PC-9 (cell line): ENCODE measurements at regions of chr19 and their contacts with region 1.

Region 1: GRCh38 chr19:45092747-45093678 is at the start of gene PPP1R37:
- DNase-seq: peak; percentile 90 to 94
- H3K4me3 ChIP-seq: peak within 1 kb of the TSS; percentile 80
- H3K27ac ChIP-seq: peak within 1 kb of the TSS; percentile 50
- H3K4me1 ChIP-seq: peaks cover 18% of the 10 kb centered on the region
- H3K27me3 ChIP-seq: no peaks in the 10 kb centered on the region
- CTCF ChIP-seq: peak; percentile 44; the same call in 1 of the 2 replicates
- total RNA-seq, gene PPP1R37: 41.1 and 49.5 TPM in 2 replicates

Region 2: DNA sequence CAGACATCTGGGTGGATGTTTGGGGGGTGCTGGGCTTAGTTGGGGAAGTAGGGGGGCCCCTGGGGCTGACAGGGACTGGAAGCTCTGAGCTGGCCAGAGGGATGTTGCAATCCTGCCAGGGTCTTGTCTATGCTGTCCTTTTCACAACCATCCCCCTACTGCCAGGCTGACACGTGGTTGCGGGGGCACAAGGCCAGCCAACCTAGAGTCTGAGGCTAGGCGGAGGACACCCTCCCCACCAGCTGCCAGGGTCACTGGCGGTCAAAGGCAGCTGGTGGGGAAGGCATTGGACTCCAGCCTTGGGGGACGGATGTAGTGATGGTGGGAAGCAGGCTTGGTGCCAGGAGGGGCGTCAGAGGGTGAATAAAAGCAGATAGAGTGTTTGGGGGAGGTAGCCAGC is 180.2 kb before region 1 on chr19:
- CTCF ChIA-PET with region 1: no interaction called
- POLR2A ChIA-PET with region 1: interaction called, 30 read pairs
- intact Hi-C with region 1: no loop called
- DNase-seq: peak in 1 of 2 experiments; percentile 13
- H3K4me3 ChIP-seq: no peak overlapping the region
- H3K27ac ChIP-seq: no peak overlapping the region
- H3K4me1 ChIP-seq: peaks cover 19% of the 10 kb centered on the region
- H3K27me3 ChIP-seq: no peaks in the 10 kb centered on the region
- CTCF ChIP-seq: no peak

Region 3: DNA sequence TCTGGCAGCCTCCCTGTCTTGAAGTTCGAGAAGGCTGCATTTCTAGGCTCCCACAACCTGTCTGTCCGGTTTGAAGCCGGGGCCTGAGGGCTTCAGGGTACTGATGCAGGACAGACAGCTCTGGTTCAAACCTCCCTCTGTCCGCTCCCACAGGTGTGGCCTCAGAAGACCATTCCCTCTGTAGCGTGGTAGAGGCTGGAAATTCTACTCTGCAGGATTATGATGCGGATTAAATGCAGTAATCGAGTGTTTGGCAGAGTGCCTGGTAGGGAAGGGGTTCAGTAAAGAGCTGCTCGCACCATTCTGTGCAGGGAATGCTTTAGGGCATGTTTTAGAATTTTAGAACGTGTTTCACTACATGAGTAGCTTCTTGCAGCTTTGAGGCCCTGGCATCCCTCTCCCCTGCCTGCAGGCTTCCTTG is 30.4 kb after region 1 on chr19:
- CTCF ChIA-PET with region 1: interaction called, 3 read pairs
- POLR2A ChIA-PET with region 1: no interaction called
- intact Hi-C with region 1: loop called (anchors 1 kb)
- DNase-seq: peak; percentile 84 to 96
- H3K4me3 ChIP-seq: no peak overlapping the region
- H3K27ac ChIP-seq: peak overlapping the region; percentile 52
- H3K4me1 ChIP-seq: peaks cover 42% of the 10 kb centered on the region
- H3K27me3 ChIP-seq: no peaks in the 10 kb centered on the region
- CTCF ChIP-seq: no peak

Region 4: GRCh38 chr19:45164577-45165335 is 71.7 kb after region 1 on chr19:
- CTCF ChIA-PET with region 1: no interaction called
- POLR2A ChIA-PET with region 1: interaction called, 13 read pairs
- intact Hi-C with region 1: no loop called
- DNase-seq: peak; percentile 82 to 84
- H3K4me3 ChIP-seq: no peak overlapping the region
- H3K27ac ChIP-seq: no peak overlapping the region
- H3K4me1 ChIP-seq: peaks cover 18% of the 10 kb centered on the region
- H3K27me3 ChIP-seq: no peaks in the 10 kb centered on the region
- CTCF ChIP-seq: no peak; the same call in 1 of the 2 replicates

Region 5: GRCh38 chr19:45245334-45245787 is 152.3 kb after region 1 on chr19 and contains the start of gene EXOC3L2:
- CTCF ChIA-PET with region 1: no interaction called
- POLR2A ChIA-PET with region 1: no interaction called
- intact Hi-C with region 1: loop called (anchors 10 kb)
- DNase-seq: no peak
- H3K4me3 ChIP-seq: no peak within 1 kb of the TSS
- H3K27ac ChIP-seq: no peak within 1 kb of the TSS
- H3K4me1 ChIP-seq: peaks cover 3% of the 10 kb centered on the region
- H3K27me3 ChIP-seq: peaks cover 6% of the 10 kb centered on the region; the same call in 1 of the 2 replicates
- CTCF ChIP-seq: no peak
- total RNA-seq, gene EXOC3L2: not detected in 2 replicates

Region 6: DNA sequence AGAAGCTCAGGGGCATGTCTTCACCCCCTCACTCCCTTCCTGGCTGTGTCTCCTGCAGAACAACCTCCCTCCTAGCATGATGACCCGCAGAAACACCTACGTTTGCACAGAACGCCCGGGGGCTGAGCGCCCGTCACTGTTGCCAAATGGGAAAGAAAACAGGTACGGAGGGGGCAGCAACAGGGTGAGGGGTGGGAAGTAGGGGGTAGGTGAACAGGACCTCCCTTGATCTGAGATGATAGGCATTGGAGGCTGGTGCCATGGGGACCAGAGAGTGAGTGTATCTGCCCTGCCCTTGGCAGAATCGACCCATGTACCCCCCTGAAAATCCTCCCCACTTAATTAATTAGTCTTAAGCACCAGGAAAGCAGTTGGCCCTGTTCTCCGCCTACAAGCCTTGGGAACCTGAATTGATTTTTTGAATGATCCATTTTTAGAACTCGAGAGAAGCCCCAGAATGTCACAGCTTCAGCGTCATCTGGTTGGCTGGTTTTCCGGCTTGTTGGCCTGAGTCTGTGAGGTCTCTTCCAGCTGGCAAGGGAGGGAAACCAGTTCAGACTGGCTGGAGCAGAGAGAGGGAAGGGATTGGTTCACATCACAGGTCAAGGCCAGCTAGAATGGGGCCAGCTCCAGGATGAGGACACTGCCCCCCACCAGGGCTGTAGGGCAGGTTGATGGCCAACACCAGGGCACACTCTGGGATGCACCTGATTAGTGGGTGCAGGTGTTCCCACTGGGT is 201.4 kb after region 1 on chr19:
- CTCF ChIA-PET with region 1: no interaction called
- POLR2A ChIA-PET with region 1: no interaction called
- intact Hi-C with region 1: no loop called
- DNase-seq: no peak
- H3K4me3 ChIP-seq: no peak overlapping the region
- H3K27ac ChIP-seq: no peak overlapping the region
- H3K4me1 ChIP-seq: no peaks in the 10 kb centered on the region
- H3K27me3 ChIP-seq: no peaks in the 10 kb centered on the region
- CTCF ChIP-seq: no peak